ENCODE measurements at regions of chr7 and their contacts with region 1.

Region 1: DNA sequence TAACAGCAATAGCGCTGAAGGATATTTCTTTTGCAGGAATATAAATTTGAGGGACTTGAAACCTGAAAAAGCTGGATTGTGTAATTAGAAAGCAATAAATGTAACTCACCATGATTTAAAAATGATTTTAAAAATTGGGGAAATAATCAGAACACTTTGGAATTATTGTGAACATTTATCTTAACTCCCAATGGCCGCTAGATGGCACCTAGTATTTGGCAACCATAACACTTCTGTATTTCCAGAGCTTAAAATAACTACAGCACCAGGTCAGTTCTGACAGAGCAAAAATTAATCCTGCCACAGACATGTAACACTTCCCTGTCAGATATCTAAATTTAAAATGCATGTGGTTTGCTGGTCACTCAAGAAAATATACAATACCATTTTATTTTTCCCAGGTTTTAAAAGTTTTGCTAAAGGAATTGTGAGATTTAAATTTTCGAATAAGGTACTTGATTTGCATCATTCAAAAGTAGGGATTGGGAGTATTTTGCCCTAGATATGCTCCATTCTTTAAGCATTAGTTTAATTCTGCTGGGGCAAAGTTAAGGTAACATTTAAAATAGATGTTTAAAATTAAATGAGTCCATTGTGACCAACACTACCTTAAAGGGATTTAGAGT is 144.5 kb downstream of the PPP1R3A start:
- DNase-seq: peak; percentile 71
- H3K4me3 ChIP-seq: no peak overlapping the region
- H3K27ac ChIP-seq: no peak overlapping the region
- H3K4me1 ChIP-seq: no peaks in the 10 kb centered on the region
- H3K27me3 ChIP-seq: no peaks in the 10 kb centered on the region
- CTCF ChIP-seq: peak; percentile 42 to 45
- POLR2A ChIP-seq: no peak

Region 2: DNA sequence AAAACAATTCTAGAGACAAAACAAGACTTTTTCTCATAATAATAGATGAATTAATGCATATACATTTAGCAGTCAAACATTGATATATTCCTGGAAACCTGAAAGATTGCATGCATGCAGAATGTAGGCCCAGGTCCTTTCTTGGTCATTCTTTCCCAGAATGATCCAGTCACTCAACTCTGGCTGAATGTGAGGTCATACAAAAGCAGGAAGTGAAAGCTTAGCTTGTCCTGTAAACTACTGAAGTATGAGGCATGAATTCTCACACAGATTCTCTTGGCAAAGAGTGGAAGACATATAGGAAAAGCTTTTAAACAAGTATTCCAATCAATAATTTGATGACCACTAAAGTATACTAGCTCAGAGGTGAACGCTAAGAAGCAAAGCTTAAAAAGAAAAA is 109.4 kb before region 1 on chr7:
- CTCF ChIA-PET with region 1: no interaction called
- POLR2A ChIA-PET with region 1: no interaction called
- dilution Hi-C with region 1: no loop called
- intact Hi-C with region 1: no loop called
- DNase-seq: no peak
- H3K4me3 ChIP-seq: no peak overlapping the region
- H3K27ac ChIP-seq: no peak overlapping the region
- H3K4me1 ChIP-seq: no peaks in the 10 kb centered on the region
- H3K27me3 ChIP-seq: no peaks in the 10 kb centered on the region
- CTCF ChIP-seq: no peak
- POLR2A ChIP-seq: no peak

Region 3: GRCh38 chr7:113790025-113790424 is 15.7 kb after region 1 on chr7:
- CTCF ChIA-PET with region 1: interaction called, 18 read pairs
- POLR2A ChIA-PET with region 1: no interaction called
- dilution Hi-C with region 1: no loop called
- intact Hi-C with region 1: no loop called
- DNase-seq: no peak
- H3K4me3 ChIP-seq: no peak overlapping the region
- H3K27ac ChIP-seq: no peak overlapping the region
- H3K4me1 ChIP-seq: no peaks in the 10 kb centered on the region
- H3K27me3 ChIP-seq: no peaks in the 10 kb centered on the region
- CTCF ChIP-seq: no peak
- POLR2A ChIP-seq: no peak

Region 4: GRCh38 chr7:113796557-113796956 is 22.3 kb after region 1 on chr7:
- CTCF ChIA-PET with region 1: interaction called, 25 read pairs
- POLR2A ChIA-PET with region 1: no interaction called
- dilution Hi-C with region 1: no loop called
- intact Hi-C with region 1: no loop called
- DNase-seq: peak; percentile 98
- H3K4me3 ChIP-seq: peak overlapping the region in 1 of 3 experiments; percentile 13
- H3K27ac ChIP-seq: peak overlapping the region; percentile 91
- H3K4me1 ChIP-seq: peaks cover 28% of the 10 kb centered on the region
- H3K27me3 ChIP-seq: no peaks in the 10 kb centered on the region
- CTCF ChIP-seq: no peak
- POLR2A ChIP-seq: peak; percentile 67

Region 5: DNA sequence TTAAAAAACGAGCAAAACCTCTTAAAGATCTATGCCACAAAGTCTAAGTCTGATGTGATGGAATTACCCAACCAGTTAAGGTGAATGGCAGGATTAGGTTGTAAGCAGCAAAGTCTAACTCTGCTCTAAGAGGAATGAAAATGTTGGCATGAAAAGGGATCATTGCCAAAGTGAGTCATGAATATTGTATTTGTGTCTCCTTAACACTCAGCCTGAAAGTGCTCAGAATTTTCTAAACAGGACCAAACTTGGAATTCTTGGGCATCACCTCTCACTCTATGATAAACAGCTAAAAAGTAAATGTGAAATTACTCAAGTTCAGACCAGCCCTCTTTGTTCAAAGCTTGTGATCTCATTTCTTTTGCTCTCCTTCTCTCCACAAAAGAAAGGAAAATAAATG is 117.5 kb after region 1 on chr7:
- CTCF ChIA-PET with region 1: interaction called, 11 read pairs
- POLR2A ChIA-PET with region 1: no interaction called
- dilution Hi-C with region 1: no loop called
- intact Hi-C with region 1: loop called (anchors 5 kb)
- DNase-seq: peak; percentile 74
- H3K4me3 ChIP-seq: no peak overlapping the region
- H3K27ac ChIP-seq: peak overlapping the region; percentile 62
- H3K4me1 ChIP-seq: peaks cover 23% of the 10 kb centered on the region
- H3K27me3 ChIP-seq: no peaks in the 10 kb centered on the region
- CTCF ChIP-seq: no peak
- POLR2A ChIP-seq: no peak

Region 6: GRCh38 chr7:114021136-114021847 is 247.0 kb after region 1 on chr7:
- CTCF ChIA-PET with region 1: interaction called, 28 read pairs
- POLR2A ChIA-PET with region 1: no interaction called
- dilution Hi-C with region 1: no loop called
- intact Hi-C with region 1: loop called (anchors 5 kb)
- DNase-seq: no peak
- H3K4me3 ChIP-seq: no peak overlapping the region
- H3K27ac ChIP-seq: no peak overlapping the region
- H3K4me1 ChIP-seq: no peaks in the 10 kb centered on the region
- H3K27me3 ChIP-seq: no peaks in the 10 kb centered on the region
- CTCF ChIP-seq: no peak
- POLR2A ChIP-seq: no peak

Region 7: GRCh38 chr7:114026486-114027089 is 252.3 kb after region 1 on chr7:
- CTCF ChIA-PET with region 1: interaction called, 28 read pairs
- POLR2A ChIA-PET with region 1: no interaction called
- dilution Hi-C with region 1: no loop called
- intact Hi-C with region 1: loop called (anchors 5 kb)
- DNase-seq: peak; percentile 64
- H3K4me3 ChIP-seq: no peak overlapping the region
- H3K27ac ChIP-seq: no peak overlapping the region
- H3K4me1 ChIP-seq: no peaks in the 10 kb centered on the region
- H3K27me3 ChIP-seq: no peaks in the 10 kb centered on the region
- CTCF ChIP-seq: peak; percentile 24 to 36
- POLR2A ChIP-seq: no peak

Region 8: GRCh38 chr7:114414156-114415063 is 640.1 kb after region 1 on chr7 and contains the start of gene FOXP2:
- CTCF ChIA-PET with region 1: no interaction called
- POLR2A ChIA-PET with region 1: no interaction called
- dilution Hi-C with region 1: no loop called
- intact Hi-C with region 1: loop called (anchors 5 kb)
- DNase-seq: peak; percentile 19
- H3K4me3 ChIP-seq: peak within 1 kb of the TSS in 1 of 3 experiments; percentile 46
- H3K27ac ChIP-seq: no peak within 1 kb of the TSS
- H3K4me1 ChIP-seq: no peaks in the 10 kb centered on the region
- H3K27me3 ChIP-seq: peaks cover 2% of the 10 kb centered on the region in 2 experiments
- CTCF ChIP-seq: no peak
- POLR2A ChIP-seq: no peak
- total RNA-seq, gene FOXP2: 2.7 and 3.3 TPM in 2 replicates